ENCODE measurements at regions of chr1 and their contacts with region 1.

Region 1: GRCh38 chr1:119008483-119009311 is 20.6 kb upstream of the TBX15 start:
- DNase-seq: no peak
- ATAC-seq: peak; percentile 63

Region 2: DNA sequence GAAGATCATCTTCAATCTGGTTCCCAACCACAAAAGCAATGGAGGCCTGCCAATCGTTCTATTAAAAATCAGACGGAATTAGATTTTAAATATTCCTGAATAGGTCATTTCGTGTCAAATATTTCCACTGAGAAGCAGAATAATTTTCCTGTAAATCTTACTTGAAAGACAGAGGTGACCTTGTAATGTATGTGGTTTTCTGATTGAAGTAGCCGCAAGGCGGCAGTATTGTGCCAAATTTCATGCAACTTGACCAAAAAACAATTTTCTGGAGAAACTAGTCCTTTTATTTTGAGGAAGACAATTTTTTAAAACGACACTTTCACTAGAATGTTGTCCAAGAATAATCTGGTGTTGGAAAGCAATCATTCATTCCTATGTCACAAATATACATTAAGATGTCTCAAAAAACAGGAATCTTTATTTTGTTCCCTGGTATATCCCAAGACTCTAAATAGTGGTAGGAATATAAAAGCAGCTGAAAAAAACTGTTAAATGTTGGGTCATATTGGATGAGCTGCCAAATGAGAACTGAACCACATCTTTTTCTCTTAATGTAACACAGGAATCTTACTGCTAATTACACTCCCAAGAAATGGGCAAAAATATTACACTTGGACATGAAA is 857.3 kb before region 1 on chr1:
- intact Hi-C with region 1: loop called (anchors 2 kb)
- DNase-seq: peak; percentile 57
- ATAC-seq: no peak

Region 3: GRCh38 chr1:118223426-118223825 is 785.3 kb before region 1 on chr1:
- intact Hi-C with region 1: loop called (anchors 2 kb)
- DNase-seq: no peak
- ATAC-seq: peak; percentile 71

Region 4: DNA sequence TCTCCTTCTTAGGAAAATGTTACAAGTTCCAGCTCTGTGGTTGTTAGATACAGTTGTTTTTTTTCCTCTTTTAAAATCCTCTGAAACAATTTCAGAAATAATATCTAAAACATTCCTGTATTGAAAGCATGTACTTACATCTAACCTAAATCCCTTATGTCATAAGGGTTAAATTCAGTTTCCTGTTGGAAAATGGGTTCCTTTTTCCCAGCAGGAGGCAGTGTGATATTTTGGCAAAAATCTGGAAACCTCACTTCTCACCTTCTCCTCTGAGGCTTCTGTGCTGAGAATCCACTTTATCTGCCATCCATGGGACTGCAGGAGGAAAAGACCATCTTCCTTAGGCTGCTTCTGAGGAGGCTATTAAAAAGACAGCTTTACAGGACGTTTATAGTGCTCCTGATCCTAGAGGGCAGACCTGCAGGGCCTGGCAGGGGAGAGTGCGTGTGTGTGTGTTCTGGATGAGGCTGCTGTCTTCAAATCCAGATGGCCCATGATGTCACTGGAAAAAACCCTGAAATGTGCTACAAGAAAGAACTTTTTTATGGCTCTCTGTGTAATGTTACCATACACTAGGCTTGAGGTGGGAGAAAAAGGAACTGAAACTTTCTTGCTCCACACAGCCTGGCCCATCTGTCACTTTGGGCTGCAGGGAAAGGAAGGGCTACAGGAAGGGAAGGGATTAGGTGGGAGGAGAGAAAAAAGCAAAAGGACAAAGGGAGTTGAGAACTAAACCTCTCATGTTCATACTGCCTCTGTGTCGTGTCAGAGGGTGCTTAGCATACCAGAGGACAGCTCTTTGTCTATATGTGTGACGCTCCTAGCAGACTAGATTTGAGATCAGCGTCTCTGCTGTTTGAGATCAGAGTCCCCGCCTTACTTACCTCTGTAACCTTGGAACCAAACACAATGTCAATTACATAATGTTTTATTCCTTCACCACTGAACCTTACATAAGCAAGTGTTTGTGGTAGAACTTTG is 444.4 kb before region 1 on chr1:
- intact Hi-C with region 1: loop called (anchors 10 kb)
- DNase-seq: no peak
- ATAC-seq: no peak

Measured in Right ventricle myocardium inferior (tissue), 1 donor.